CD4-positive, alpha-beta memory T cell (primary cell): ENCODE measurements at regions of chr3 and their contacts with region 1.

Region 1: GRCh38 chr3:9249273-9250192 is at the start of gene SRGAP3:
- DNase-seq: peak; percentile 72 to 81 (median 77)
- H3K4me3 ChIP-seq: peak within 1 kb of the TSS; percentile 55 to 64
- H3K4me3 Mint-ChIP-seq: peak within 1 kb of the TSS; percentile 82 to 94 (median 90)
- H3K27ac ChIP-seq: no peak within 1 kb of the TSS
- H3K27ac Mint-ChIP-seq: peak within 1 kb of the TSS; percentile 17 to 81 (median 63)
- H3K4me1 ChIP-seq: peaks cover 20% of the 10 kb centered on the region
- H3K4me1 Mint-ChIP-seq: peaks cover 14 to 33% (median 19%) of the 10 kb centered on the region in 4 donors
- H3K27me3 ChIP-seq: no peaks in the 10 kb centered on the region
- H3K27me3 Mint-ChIP-seq: peaks cover 5 to 9% of the 10 kb centered on the region in 2 donors
- total RNA-seq, gene SRGAP3: 2.2 to 2.4 TPM

Region 2: GRCh38 chr3:8970971-8971589 is 278.5 kb before region 1 on chr3:
- CTCF ChIA-PET with region 1: interaction called, 3 read pairs
- POLR2A ChIA-PET with region 1: interaction called, 3 read pairs
- intact Hi-C with region 1: loop called (anchors 1 kb)
- DNase-seq: peak; percentile 68 to 78 (median 73)
- H3K4me3 ChIP-seq: no peak overlapping the region
- H3K4me3 Mint-ChIP-seq: peak overlapping the region in 3 of 8 donors; percentile 40 to 58 (median 41)
- H3K27ac ChIP-seq: no peak overlapping the region
- H3K27ac Mint-ChIP-seq: no peak overlapping the region
- H3K4me1 ChIP-seq: no peaks in the 10 kb centered on the region
- H3K4me1 Mint-ChIP-seq: peaks cover 2 to 5% (median 4%) of the 10 kb centered on the region in 4 donors
- H3K27me3 ChIP-seq: no peaks in the 10 kb centered on the region
- H3K27me3 Mint-ChIP-seq: peaks cover 8 to 12% of the 10 kb centered on the region in 2 donors

Region 3: GRCh38 chr3:9179826-9180763 is 69.4 kb before region 1 on chr3:
- CTCF ChIA-PET with region 1: no interaction called
- POLR2A ChIA-PET with region 1: no interaction called
- intact Hi-C with region 1: loop called (anchors 5 kb)
- DNase-seq: no peak
- H3K4me3 ChIP-seq: peak overlapping the region; percentile 9 to 28
- H3K4me3 Mint-ChIP-seq: peak overlapping the region; percentile 77 to 87 (median 82)
- H3K27ac ChIP-seq: peak overlapping the region; percentile 7
- H3K27ac Mint-ChIP-seq: peak overlapping the region in 6 of 7 donors; percentile 44 to 82 (median 77)
- H3K4me1 ChIP-seq: peaks cover 18% of the 10 kb centered on the region
- H3K4me1 Mint-ChIP-seq: peaks cover 17 to 29% (median 23%) of the 10 kb centered on the region in 4 donors
- H3K27me3 ChIP-seq: no peaks in the 10 kb centered on the region
- H3K27me3 Mint-ChIP-seq: no peaks in the 10 kb centered on the region